ENCODE measurements at regions of chr17 and their contacts with region 1.

Region 1: GRCh38 chr17:72120642-72121163 is at the start of gene SOX9:
- H3K4me3 ChIP-seq: peak within 1 kb of the TSS; percentile 89
- H3K27ac ChIP-seq: peak within 1 kb of the TSS; percentile 95
- H3K4me1 ChIP-seq: peaks cover 17% of the 10 kb centered on the region
- CTCF ChIP-seq: no peak

Region 2: GRCh38 chr17:72110231-72110944 is 10.3 kb before region 1 on chr17:
- CTCF ChIA-PET with region 1: no interaction called
- POLR2A ChIA-PET with region 1: interaction called, 13 read pairs
- H3K4me3 ChIP-seq: no peak overlapping the region
- H3K27ac ChIP-seq: no peak overlapping the region
- H3K4me1 ChIP-seq: peaks cover 9% of the 10 kb centered on the region
- CTCF ChIP-seq: no peak

Region 3: GRCh38 chr17:72287586-72287985 is 166.9 kb after region 1 on chr17:
- CTCF ChIA-PET with region 1: no interaction called
- POLR2A ChIA-PET with region 1: no interaction called
- H3K4me3 ChIP-seq: no peak overlapping the region
- H3K27ac ChIP-seq: no peak overlapping the region
- H3K4me1 ChIP-seq: no peaks in the 10 kb centered on the region
- CTCF ChIP-seq: no peak

Region 4: GRCh38 chr17:72321896-72322295 is 201.2 kb after region 1 on chr17:
- CTCF ChIA-PET with region 1: no interaction called
- POLR2A ChIA-PET with region 1: no interaction called
- H3K4me3 ChIP-seq: no peak overlapping the region
- H3K27ac ChIP-seq: no peak overlapping the region
- H3K4me1 ChIP-seq: no peaks in the 10 kb centered on the region
- CTCF ChIP-seq: no peak

Region 5: DNA sequence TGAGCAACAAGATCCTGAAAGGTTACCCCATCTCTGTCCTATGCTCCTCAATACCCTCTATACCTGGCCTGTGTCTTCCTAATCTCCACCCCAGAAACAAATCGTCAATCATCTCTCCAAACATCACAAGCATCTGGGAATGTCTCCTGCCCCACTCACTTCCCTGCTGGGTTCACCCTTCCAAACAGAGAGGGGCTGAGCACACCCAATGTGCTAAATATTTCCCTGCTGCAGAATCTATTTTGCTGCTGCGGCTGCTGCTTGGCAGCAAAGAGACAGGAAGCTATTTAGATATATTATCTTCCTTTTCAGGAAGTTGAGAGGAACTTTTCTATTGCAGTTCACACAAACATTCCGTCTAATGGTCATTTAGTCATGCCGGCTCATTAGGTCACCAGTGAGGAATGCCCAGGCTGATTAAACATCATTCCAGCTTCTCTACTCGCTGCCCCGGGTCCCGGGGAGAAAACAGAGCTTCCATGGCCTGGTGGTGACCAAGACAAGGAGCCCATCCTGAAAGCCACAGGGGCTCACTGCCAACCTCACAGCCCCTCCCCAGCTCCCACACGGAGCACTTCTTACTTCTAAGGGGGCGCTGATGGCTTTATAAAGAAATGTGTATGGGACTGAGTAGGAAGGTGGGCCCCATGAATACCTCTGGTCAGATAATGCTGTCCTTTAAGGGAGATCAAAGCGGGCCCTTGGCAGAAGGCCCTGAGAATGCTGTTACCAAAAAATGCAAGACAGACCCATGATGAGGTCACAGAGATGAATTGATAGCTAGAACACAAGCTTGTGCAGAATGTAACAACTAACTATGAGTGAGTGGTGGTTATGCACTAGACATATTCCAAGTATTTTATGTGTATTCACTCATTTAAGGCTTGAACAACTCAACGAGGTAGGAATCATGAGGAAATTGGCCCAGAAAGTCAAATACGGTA is 218.4 kb after region 1 on chr17:
- CTCF ChIA-PET with region 1: no interaction called
- POLR2A ChIA-PET with region 1: interaction called, 31 read pairs
- H3K4me3 ChIP-seq: no peak overlapping the region
- H3K27ac ChIP-seq: peak overlapping the region; percentile 3; the same call in 1 of the 2 replicates
- H3K4me1 ChIP-seq: peaks cover 9% of the 10 kb centered on the region; the same call in 1 of the 2 replicates
- CTCF ChIP-seq: no peak

Region 6: DNA sequence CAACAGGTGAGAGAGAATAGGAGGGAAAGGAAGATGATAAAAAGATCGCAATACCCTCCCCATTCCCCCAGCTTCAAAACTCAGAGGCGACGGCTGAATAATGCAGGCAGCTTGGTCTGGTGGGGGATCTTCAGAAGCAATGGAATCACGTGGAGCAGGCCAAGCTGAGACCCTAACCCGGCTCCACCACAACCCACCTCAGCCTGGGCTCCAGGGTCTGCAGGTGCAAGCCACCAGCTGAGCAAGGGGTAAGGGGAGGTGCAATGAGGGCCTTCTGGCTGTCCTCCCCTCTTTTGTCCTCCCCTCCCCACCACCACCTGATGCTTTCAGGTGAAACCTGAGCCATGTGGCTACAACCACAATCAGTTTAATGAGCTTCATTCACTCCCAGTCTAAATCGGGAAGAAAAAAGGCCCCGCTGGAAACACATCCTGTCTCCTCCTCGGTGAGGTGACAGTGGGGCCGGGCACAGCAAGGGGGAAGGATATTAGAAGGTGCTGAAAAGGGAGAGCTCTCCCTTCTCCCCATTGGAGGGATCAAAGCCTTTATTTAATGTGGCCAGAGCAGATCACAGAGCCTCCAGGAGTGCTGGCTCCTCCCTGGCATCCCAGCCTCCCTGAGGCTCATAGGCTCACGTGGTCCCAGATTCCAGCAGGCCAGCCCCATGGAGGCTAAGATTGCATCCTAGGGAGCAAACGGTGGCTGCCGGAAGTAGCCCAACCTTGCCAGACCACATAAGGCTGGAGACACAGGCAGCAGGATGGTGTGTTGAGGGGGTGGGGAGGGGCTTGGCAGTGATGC is 261.1 kb after region 1 on chr17:
- CTCF ChIA-PET with region 1: no interaction called
- POLR2A ChIA-PET with region 1: interaction called, 10 read pairs
- H3K4me3 ChIP-seq: no peak overlapping the region
- H3K27ac ChIP-seq: peak overlapping the region; percentile 72
- H3K4me1 ChIP-seq: peaks cover 25% of the 10 kb centered on the region
- CTCF ChIP-seq: no peak

Region 7: GRCh38 chr17:72465191-72466024 is 344.7 kb after region 1 on chr17:
- CTCF ChIA-PET with region 1: no interaction called
- POLR2A ChIA-PET with region 1: interaction called, 16 read pairs
- H3K4me3 ChIP-seq: peak overlapping the region; percentile 15
- H3K27ac ChIP-seq: peak overlapping the region; percentile 25; the same call in 1 of the 2 replicates
- H3K4me1 ChIP-seq: peaks cover 11% of the 10 kb centered on the region
- CTCF ChIP-seq: no peak

Measured in HEK293 (cell line).